Activated T-helper 1 cell treated with anti-CD3 and anti-CD28 coated beads, Interleukin-12 subunit alpha, Interleukin-12 subunit beta, Interleukin-2, Interleukin-4 antibody, amounts not matched to agents 30 ng/mL and 10 ng/mL and 1 ng/mL, durations not matched to agents 14 hours and 24 hours and 36 hours (primary cell): ENCODE measurements at regions of chr7 and their contacts with region 1.

Region 1: DNA sequence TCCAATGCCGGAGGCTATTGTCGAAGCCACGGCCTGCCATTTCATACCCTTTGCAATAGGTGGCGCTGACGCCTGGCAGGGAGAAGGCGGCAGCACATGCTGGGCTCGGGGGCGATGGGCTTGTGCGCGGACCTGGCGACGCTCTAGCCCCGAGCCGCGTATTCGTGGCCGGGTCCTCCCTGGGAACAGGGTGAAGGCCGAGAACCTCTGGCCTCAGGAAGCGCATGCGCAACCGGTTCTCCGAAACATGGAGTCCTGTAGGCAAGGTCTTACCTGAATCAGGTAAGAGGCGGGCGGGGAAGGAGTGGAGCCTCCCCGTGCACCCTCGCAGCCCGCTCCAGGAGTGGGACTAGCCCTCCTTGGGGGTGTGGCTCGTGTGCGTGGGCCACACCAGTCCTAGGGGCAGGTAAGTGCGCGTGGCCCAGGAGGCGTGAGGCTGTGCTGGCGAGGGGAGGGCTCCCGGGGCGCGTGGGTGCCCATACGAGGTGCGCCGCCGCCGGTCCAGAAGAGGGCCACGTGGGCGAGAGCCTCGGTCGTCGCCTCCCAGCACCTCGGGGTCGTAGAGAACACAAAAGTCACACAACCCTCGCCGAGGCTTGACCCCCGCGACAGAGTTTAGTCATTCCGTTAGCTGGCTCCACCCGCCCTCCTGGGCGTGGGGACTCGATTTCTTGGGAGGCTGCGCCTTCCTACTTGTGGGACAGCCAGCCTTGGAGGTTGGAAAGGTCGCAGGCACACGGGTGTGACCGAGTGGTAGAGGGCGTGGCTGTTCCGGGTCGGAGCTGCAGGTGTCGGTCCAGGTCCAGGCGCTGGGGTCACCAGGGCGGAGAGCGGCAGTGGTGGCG is 5.5 kb upstream of the MEST start:
- DNase-seq: no peak
- H3K4me3 Mint-ChIP-seq: peak overlapping the region; percentile 78
- H3K27ac Mint-ChIP-seq: no peak overlapping the region
- H3K4me1 Mint-ChIP-seq: peaks cover 21% of the 10 kb centered on the region
- H3K27me3 Mint-ChIP-seq: peaks cover 41% of the 10 kb centered on the region

Region 2: GRCh38 chr7:129780257-129780973 is 705.9 kb before region 1 on chr7:
- intact Hi-C with region 1: loop called (anchors 5 kb)
- DNase-seq: peak; percentile 48
- H3K4me3 Mint-ChIP-seq: peak overlapping the region; percentile 63
- H3K27ac Mint-ChIP-seq: no peak overlapping the region
- H3K4me1 Mint-ChIP-seq: peaks cover 23% of the 10 kb centered on the region
- H3K27me3 Mint-ChIP-seq: peaks cover 67% of the 10 kb centered on the region

Region 3: GRCh38 chr7:130505753-130506152 is 19.4 kb after region 1 on chr7:
- intact Hi-C with region 1: no loop called
- DNase-seq: no peak
- H3K4me3 Mint-ChIP-seq: no peak overlapping the region
- H3K27ac Mint-ChIP-seq: no peak overlapping the region
- H3K4me1 Mint-ChIP-seq: no peaks in the 10 kb centered on the region
- H3K27me3 Mint-ChIP-seq: no peaks in the 10 kb centered on the region

Region 4: GRCh38 chr7:130560970-130561369 is 74.6 kb after region 1 on chr7:
- intact Hi-C with region 1: loop called (anchors 5 kb)
- DNase-seq: no peak
- H3K4me3 Mint-ChIP-seq: no peak overlapping the region
- H3K27ac Mint-ChIP-seq: no peak overlapping the region
- H3K4me1 Mint-ChIP-seq: no peaks in the 10 kb centered on the region
- H3K27me3 Mint-ChIP-seq: no peaks in the 10 kb centered on the region

Region 5: DNA sequence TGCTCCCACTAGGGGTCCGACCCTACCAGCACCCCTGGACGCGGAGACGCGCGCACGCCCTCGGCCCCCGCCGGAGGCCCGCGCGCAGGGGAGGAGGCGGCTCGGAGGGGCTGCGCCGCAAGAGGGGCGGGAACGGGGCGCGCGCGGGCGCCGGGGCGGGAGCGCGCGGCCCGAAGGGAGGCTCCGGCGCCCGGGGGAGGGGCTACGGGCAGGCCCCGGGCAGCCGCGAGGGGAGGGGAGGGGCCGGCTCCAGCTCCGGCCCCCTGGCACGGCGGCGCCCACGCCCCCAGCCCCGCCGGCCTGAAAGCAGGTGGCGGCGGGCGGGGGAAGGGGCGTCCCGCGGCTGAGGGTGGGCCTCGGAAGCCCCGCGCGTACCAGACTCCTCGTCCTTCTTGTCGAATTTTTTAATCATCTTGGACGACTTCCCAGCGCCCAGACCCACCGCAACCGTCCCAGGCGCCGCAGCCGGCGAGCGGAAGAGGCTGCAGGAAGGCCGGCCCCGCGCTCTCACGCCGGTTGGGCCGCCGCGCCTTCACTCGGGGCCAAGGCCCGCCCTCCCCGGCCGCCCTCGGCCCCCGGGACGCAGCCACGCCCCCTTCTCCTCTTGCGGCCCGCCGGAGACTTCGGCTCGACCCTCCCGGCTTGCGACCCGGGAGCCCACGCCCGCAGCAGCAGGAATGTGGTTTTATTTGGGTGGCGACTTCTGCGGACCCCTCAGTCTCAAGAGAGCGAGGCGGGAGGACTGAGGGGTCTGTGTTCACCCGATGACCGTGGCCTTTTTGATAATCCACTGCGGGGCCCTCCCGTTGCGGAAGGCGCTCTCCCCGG is 182.1 kb after region 1 on chr7 and contains the start of gene COPG2:
- intact Hi-C with region 1: loop called (anchors 10 kb)
- DNase-seq: peak; percentile 76
- H3K4me3 Mint-ChIP-seq: peak within 1 kb of the TSS; percentile 88
- H3K27ac Mint-ChIP-seq: peak within 1 kb of the TSS; percentile 41
- H3K4me1 Mint-ChIP-seq: peaks cover 22% of the 10 kb centered on the region
- H3K27me3 Mint-ChIP-seq: no peaks in the 10 kb centered on the region
- total RNA-seq, gene COPG2: 19.3 and 20.9 TPM in 2 replicates

Region 6: DNA sequence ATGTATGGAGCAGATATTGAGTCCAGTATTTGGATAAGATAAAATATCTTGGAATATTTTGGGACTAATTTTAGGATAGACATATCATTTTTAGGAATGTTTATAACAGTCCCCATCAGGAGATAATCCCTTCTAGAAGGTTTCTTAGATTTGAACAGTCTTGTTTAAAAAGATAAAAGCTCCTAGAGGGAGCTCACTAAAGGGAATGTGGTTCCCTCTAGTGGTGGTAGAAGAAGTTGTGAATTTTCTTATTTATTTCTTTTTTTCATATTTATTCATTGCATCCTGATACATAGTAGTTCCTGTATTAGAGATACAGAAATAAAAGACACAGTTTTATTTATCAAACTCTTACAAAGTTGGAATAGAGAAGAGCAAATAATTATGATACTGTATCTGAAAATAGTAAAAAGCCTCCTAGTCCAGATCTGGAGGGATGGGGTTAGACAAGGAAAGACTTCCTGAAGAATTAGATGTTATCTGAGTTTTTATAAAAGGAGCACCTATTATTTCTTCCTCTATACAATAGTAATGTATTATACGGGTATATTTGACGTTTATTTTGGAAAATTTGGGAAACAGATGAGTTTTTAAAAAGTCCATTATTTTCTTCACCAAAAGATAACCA is 272.2 kb after region 1 on chr7:
- intact Hi-C with region 1: loop called (anchors 1 kb)
- DNase-seq: no peak
- H3K4me3 Mint-ChIP-seq: no peak overlapping the region
- H3K27ac Mint-ChIP-seq: no peak overlapping the region
- H3K4me1 Mint-ChIP-seq: no peaks in the 10 kb centered on the region
- H3K27me3 Mint-ChIP-seq: peaks cover 13% of the 10 kb centered on the region

Region 7: GRCh38 chr7:131068604-131069021 is 582.3 kb after region 1 on chr7:
- intact Hi-C with region 1: no loop called
- DNase-seq: no peak
- H3K4me3 Mint-ChIP-seq: no peak overlapping the region
- H3K27ac Mint-ChIP-seq: no peak overlapping the region
- H3K4me1 Mint-ChIP-seq: peaks cover 41% of the 10 kb centered on the region
- H3K27me3 Mint-ChIP-seq: no peaks in the 10 kb centered on the region